HepG2 (cell line): ENCODE measurements at regions of chr1 and their contacts with region 1.

Region 1: GRCh38 chr1:161139765-161140164 is 7.3 kb upstream of the DEDD start:
- DNase-seq: peak; percentile 56
- ATAC-seq: peak; percentile 54
- H3K4me3 ChIP-seq: no peak overlapping the region
- H3K27ac ChIP-seq: no peak overlapping the region
- H3K4me1 ChIP-seq: no peaks in the 10 kb centered on the region
- H3K27me3 ChIP-seq: no peaks in the 10 kb centered on the region
- CTCF ChIP-seq: peak; percentile 52
- EP300 ChIP-seq: no peak
- POLR2A ChIP-seq: no peak
- RAD21 ChIP-seq: 0 out of 2 replicates have a peak, but pooled peaks have one; percentile 22

Region 2: GRCh38 chr1:160855181-160855981 is 284.4 kb before region 1 on chr1:
- CTCF ChIA-PET with region 1: no interaction called
- POLR2A ChIA-PET with region 1: no interaction called
- in situ Hi-C with region 1: no loop called
- intact Hi-C with region 1: no loop called
- DNase-seq: no peak
- ATAC-seq: no peak
- H3K4me3 ChIP-seq: no peak overlapping the region
- H3K27ac ChIP-seq: no peak overlapping the region
- H3K4me1 ChIP-seq: no peaks in the 10 kb centered on the region
- H3K27me3 ChIP-seq: no peaks in the 10 kb centered on the region
- CTCF ChIP-seq: no peak
- EP300 ChIP-seq: no peak
- POLR2A ChIP-seq: no peak
- RAD21 ChIP-seq: no peak

Region 3: DNA sequence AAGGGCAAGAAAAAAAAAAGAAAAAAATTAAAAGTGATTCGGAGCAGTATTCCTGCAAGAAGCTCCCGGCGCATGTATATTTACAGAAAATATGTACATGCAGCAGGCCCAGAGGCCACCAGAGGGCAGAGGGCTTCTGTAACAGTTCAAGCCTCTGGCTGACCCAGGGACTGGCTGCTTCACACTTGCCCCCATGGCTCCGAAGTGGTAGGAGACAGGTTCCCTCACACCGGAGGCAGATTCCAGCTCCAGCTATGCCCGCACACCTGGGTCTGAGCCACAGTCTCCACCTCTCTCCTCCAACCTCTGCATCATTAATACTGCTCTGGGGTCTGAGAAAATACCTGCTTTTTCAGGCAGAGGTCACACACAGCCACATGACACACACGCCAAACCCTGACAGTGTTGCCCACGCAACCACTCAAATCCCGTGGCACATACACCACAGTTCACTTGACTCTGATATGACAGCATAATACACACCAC is 67.8 kb before region 1 on chr1:
- CTCF ChIA-PET with region 1: interaction called, 4 read pairs
- POLR2A ChIA-PET with region 1: no interaction called
- in situ Hi-C with region 1: no loop called
- intact Hi-C with region 1: loop called (anchors 1 kb)
- DNase-seq: peak; percentile 68
- ATAC-seq: peak; percentile 72
- H3K4me3 ChIP-seq: no peak overlapping the region
- H3K27ac ChIP-seq: peak overlapping the region; percentile 12
- H3K4me1 ChIP-seq: peaks cover 35% of the 10 kb centered on the region
- H3K27me3 ChIP-seq: no peaks in the 10 kb centered on the region
- CTCF ChIP-seq: peak; percentile 80
- EP300 ChIP-seq: no peak
- POLR2A ChIP-seq: no peak
- RAD21 ChIP-seq: peak; percentile 67

Region 4: DNA sequence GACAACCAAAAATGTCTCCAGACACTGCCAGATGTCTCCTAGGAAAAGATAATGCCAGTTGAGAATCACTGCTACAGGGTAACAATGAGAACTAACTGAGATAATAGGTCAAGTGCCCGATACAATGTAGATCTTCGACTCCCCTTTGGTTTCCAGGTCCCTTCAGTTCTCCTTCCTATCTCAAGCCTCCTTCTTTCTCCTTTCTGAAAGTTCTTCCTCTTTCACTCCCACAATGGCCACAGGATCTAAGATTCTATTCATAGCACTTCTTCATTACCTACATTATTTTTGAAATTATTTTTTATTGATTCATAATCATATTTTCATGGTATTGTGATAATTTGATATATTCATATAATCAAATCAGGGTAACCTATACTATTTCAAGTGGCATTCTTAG is 28.2 kb before region 1 on chr1:
- CTCF ChIA-PET with region 1: no interaction called
- POLR2A ChIA-PET with region 1: no interaction called
- in situ Hi-C with region 1: no loop called
- intact Hi-C with region 1: no loop called
- DNase-seq: no peak
- ATAC-seq: no peak
- H3K4me3 ChIP-seq: no peak overlapping the region
- H3K27ac ChIP-seq: no peak overlapping the region
- H3K4me1 ChIP-seq: peaks cover 43% of the 10 kb centered on the region
- H3K27me3 ChIP-seq: no peaks in the 10 kb centered on the region
- CTCF ChIP-seq: no peak
- EP300 ChIP-seq: no peak
- POLR2A ChIP-seq: no peak
- RAD21 ChIP-seq: no peak